Gastrocnemius medialis (tissue), 4 donors: ENCODE measurements at regions of chr22 and their contacts with region 1.

Region 1: DNA sequence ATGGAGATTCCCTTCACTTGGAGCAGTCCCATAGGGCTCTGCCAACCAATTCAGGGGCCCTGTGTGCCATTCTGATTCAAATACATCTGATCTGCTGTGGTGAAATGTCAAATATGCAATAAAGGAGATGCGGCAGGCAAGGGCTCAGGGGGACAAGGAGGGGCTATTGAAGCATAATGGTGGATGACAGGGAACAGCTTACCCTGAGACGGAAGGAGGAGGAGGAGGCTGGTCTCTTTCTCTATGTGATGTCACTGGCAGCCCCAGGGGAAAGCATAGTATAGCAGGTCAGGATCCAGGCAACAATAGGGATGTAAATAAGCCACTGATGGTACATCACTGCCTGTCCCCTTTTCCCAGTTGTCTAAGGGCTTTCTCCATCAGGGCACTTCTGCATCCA is 350.9 kb upstream of the SYN3 start:
- DNase-seq: no peak
- ATAC-seq: no peak
- H3K4me3 ChIP-seq: no peak overlapping the region
- H3K27ac ChIP-seq: no peak overlapping the region
- H3K4me1 ChIP-seq: peaks cover 9% of the 10 kb centered on the region in 2 donors
- H3K27me3 ChIP-seq: no peaks in the 10 kb centered on the region
- CTCF ChIP-seq: no peak
- POLR2A ChIP-seq: no peak

Region 2: GRCh38 chr22:33487041-33487716 is 78.1 kb after region 1 on chr22:
- in situ Hi-C with region 1: no loop called
- intact Hi-C with region 1: loop called (anchors 2 kb)
- DNase-seq: no peak
- ATAC-seq: no peak
- H3K4me3 ChIP-seq: no peak overlapping the region
- H3K27ac ChIP-seq: no peak overlapping the region
- H3K4me1 ChIP-seq: no peaks in the 10 kb centered on the region
- H3K27me3 ChIP-seq: no peaks in the 10 kb centered on the region
- CTCF ChIP-seq: no peak
- POLR2A ChIP-seq: no peak

Region 3: GRCh38 chr22:33529424-33530113 is 120.5 kb after region 1 on chr22:
- in situ Hi-C with region 1: no loop called
- intact Hi-C with region 1: no loop called
- DNase-seq: no peak
- ATAC-seq: peak; percentile 39 to 66
- H3K4me3 ChIP-seq: no peak overlapping the region
- H3K27ac ChIP-seq: peak overlapping the region in 3 of 4 donors; percentile 42 to 60 (median 49)
- H3K4me1 ChIP-seq: peaks cover 24 to 25% of the 10 kb centered on the region in 2 donors
- H3K27me3 ChIP-seq: no peaks in the 10 kb centered on the region
- CTCF ChIP-seq: no peak
- POLR2A ChIP-seq: no peak

Region 4: DNA sequence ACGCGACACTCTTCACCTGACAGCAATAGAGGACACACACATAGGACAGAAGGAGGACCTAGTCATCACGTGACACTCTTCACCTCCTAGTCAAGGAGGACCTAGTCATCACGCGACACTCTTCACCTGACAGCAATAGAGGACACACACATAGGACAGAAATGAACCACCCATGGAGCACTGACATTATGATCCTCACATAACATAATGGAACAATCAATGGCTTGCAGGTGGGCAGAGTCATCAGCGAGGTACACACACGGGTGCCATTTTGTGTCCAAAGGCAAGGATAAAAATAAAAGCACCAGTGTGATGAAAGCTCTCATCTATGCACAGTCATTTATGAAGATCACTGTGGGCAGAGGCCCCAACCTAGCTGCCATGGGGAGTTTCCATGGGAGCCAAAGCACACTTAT is 156.5 kb after region 1 on chr22:
- in situ Hi-C with region 1: no loop called
- intact Hi-C with region 1: no loop called
- DNase-seq: no peak
- ATAC-seq: no peak
- H3K4me3 ChIP-seq: no peak overlapping the region
- H3K27ac ChIP-seq: no peak overlapping the region
- H3K4me1 ChIP-seq: peaks cover 10 to 13% of the 10 kb centered on the region in 2 donors
- H3K27me3 ChIP-seq: no peaks in the 10 kb centered on the region
- CTCF ChIP-seq: no peak
- POLR2A ChIP-seq: no peak